Activated CD4-positive, alpha-beta memory T cell treated with anti-CD3 and anti-CD28 coated beads, Interleukin-2, amount 10 ng/mL, durations not matched to agents 7 days and 5 days (primary cell): ENCODE measurements at regions of chr6 and their contacts with region 1.

Region 1: GRCh38 chr6:144104898-144105487 is 9.6 kb upstream of the SF3B5 start:
- DNase-seq: no peak
- H3K4me3 Mint-ChIP-seq: no peak overlapping the region
- H3K27ac Mint-ChIP-seq: no peak overlapping the region
- H3K4me1 Mint-ChIP-seq: peaks cover 7% of the 10 kb centered on the region
- H3K27me3 Mint-ChIP-seq: peaks cover 5% of the 10 kb centered on the region

Region 2: DNA sequence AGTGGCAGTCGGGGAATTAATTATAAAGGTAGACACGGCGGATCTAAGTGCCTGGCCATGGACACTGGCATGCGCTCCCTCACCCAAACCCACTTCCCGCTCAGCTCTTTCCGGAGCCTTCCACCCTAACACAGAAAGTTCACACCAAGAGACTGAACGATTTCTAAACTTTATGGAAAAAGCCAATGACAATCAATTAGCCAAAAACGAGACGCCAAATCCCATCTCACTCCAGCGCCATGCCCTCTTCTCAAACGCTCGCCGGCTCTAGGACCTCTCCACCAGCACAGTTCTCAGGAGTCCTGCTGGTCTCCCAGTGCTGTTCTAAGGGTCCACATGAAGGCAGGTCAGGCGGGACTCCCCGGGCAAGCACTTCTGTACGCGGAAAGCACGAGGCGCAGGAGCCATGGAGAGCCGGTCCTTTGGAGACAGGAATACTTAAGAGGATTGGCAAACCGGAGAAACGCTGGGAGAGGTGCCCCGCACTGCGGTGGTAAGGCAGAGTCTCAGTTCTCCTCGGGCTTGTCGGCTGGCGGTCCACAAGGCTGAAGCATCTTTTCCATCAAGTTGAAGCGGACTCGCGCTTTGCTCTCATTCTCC is 10.2 kb before region 1 on chr6:
- CTCF ChIA-PET with region 1: no interaction called
- POLR2A ChIA-PET with region 1: no interaction called
- DNase-seq: no peak
- H3K4me3 Mint-ChIP-seq: peak overlapping the region; percentile 88
- H3K27ac Mint-ChIP-seq: peak overlapping the region; percentile 94
- H3K4me1 Mint-ChIP-seq: peaks cover 24% of the 10 kb centered on the region
- H3K27me3 Mint-ChIP-seq: no peaks in the 10 kb centered on the region

Region 3: DNA sequence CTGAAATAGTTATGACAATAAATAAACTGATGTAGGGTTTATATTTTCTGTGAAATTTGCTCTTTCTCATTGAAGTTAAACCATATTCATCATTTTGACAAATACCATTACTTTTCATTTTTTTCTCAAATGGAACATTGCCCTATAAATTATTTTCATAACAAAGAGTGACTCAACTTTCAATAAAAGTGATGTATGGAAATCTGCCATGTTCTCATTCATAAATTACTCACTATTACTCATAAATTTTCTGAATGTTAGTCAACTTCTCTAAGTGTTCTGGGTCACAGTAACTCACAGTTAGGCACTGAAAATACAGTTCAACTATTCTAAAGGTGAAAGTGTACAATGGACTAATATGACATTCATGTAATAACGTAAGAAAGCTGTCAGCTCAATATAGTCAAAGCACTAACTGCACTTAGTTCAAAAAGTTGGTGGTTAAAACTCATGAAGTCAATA is 26.3 kb after region 1 on chr6:
- CTCF ChIA-PET with region 1: no interaction called
- POLR2A ChIA-PET with region 1: no interaction called
- DNase-seq: no peak
- H3K4me3 Mint-ChIP-seq: no peak overlapping the region
- H3K27ac Mint-ChIP-seq: no peak overlapping the region
- H3K4me1 Mint-ChIP-seq: peaks cover 17% of the 10 kb centered on the region
- H3K27me3 Mint-ChIP-seq: peaks cover 18% of the 10 kb centered on the region

Region 4: DNA sequence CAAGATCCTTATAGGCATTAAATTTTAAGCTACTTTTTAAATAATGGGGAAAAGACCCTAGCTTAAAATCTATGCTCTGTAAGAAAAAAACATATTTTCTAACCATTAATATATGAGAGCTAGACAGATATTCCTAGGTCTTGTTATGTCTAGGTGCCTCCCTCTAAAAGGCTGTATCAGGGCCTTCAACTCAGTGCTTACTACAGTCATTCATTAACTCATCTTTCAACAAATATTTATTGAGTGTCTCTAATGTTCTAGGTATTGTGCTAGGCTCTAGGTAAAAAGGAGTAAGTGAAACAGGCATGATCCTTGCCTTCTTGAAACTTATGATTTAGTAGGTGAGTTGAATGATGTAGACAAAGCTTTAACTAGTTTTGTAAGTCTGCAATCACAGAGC is 38.9 kb after region 1 on chr6:
- CTCF ChIA-PET with region 1: no interaction called
- POLR2A ChIA-PET with region 1: no interaction called
- DNase-seq: no peak
- H3K4me3 Mint-ChIP-seq: no peak overlapping the region
- H3K27ac Mint-ChIP-seq: no peak overlapping the region
- H3K4me1 Mint-ChIP-seq: peaks cover 6% of the 10 kb centered on the region
- H3K27me3 Mint-ChIP-seq: peaks cover 7% of the 10 kb centered on the region

Region 5: GRCh38 chr6:144215932-144216667 is 111.1 kb after region 1 on chr6:
- CTCF ChIA-PET with region 1: interaction called, 31 read pairs
- POLR2A ChIA-PET with region 1: interaction called, 4 read pairs
- DNase-seq: peak; percentile 93
- H3K4me3 Mint-ChIP-seq: peak overlapping the region; percentile 83
- H3K27ac Mint-ChIP-seq: peak overlapping the region; percentile 97
- H3K4me1 Mint-ChIP-seq: peaks cover 38% of the 10 kb centered on the region
- H3K27me3 Mint-ChIP-seq: peaks cover 1% of the 10 kb centered on the region